ENCODE measurements at regions of chr22 and their contacts with region 1.

Region 1: DNA sequence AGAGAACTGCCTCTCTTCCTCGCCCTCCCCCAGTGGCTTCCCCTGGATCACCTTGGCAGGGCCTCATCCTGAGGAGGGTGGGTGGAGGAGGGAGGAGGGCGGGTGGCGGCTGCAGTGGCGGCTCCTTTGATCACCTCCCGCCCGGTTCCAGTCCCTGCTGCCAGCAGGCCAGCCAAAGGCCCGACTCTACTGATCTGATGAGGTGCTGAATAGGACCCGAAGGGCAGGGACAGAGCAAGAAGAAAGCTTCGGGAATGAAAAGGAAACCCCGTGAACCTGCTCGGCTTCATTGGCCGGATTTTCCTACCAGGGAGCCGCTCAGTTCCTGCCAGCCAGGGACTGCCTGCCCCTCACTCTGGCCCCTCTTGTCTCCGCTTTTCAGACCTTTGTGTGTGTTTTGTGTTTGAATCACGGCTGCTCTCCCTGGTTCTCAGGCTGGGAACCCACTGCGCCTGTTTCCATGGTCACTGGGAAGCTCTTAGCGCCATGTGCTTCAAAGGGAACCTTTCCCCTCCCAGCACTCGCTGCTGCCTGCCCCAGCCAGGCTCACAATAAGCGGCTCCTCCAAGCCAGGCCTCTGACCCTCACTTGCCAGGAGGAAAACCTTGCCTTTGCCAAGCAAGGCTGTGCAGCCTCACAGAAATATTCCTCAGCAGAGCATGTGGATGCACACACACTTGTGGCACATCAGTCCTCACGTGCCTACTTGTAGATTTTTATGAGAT is 56.8 kb downstream of the C22orf31 start:
- DNase-seq: peak; percentile 83
- ATAC-seq: peak; percentile 89
- H3K4me3 ChIP-seq: no peak overlapping the region
- H3K27ac ChIP-seq: peak overlapping the region; percentile 44
- H3K4me1 ChIP-seq: peaks cover 14% of the 10 kb centered on the region
- H3K27me3 ChIP-seq: no peaks in the 10 kb centered on the region
- CTCF ChIP-seq: no peak

Region 2: DNA sequence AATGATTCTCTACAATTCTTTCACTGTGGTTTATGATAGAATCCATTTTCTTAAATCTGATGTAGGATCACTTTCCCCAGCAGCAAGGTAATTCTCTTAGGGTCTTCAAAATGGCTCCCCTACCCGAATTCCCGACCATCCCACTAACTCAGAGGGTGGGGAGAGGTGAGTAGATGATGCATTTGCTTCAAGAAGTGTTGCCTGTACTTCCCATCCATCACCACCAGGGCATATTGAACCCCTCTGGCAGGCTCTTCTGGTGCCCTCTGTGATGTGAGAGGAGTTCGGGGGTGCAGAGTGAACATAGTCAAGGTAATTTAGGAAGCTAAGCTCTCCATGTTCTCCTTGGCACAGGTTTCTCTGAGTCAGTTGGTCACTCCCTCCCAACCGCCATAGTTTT is 69.1 kb before region 1 on chr22:
- intact Hi-C with region 1: loop called (anchors 10 kb)
- DNase-seq: no peak
- ATAC-seq: no peak
- H3K4me3 ChIP-seq: no peak overlapping the region
- H3K27ac ChIP-seq: no peak overlapping the region
- H3K4me1 ChIP-seq: peaks cover 13% of the 10 kb centered on the region
- H3K27me3 ChIP-seq: no peaks in the 10 kb centered on the region
- CTCF ChIP-seq: peak; percentile 20

Region 3: DNA sequence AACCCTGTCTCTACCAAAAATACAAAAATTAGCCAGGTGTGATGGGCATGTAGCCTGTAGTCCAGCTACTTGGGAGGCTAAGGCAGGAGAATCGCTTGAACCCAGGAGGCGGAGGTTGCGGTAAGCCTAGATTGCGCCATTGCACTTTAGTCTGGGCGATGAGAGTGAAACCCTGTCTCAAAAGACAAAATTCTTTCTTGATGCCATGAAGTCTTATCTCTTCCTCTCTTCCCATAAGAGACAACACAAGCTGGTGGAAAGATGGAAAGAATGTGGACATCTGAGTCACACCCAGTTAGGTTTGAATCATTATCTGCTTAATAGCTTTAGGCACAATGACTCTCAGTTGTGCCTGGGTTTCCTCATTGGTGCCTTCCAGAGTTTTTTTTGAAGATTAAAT is 103.3 kb after region 1 on chr22:
- intact Hi-C with region 1: no loop called
- DNase-seq: no peak
- ATAC-seq: no peak
- H3K4me3 ChIP-seq: no peak overlapping the region
- H3K27ac ChIP-seq: no peak overlapping the region
- H3K4me1 ChIP-seq: no peaks in the 10 kb centered on the region
- H3K27me3 ChIP-seq: no peaks in the 10 kb centered on the region
- CTCF ChIP-seq: no peak